ENCODE measurements at regions of chr1 and their contacts with region 1.

Region 1: DNA sequence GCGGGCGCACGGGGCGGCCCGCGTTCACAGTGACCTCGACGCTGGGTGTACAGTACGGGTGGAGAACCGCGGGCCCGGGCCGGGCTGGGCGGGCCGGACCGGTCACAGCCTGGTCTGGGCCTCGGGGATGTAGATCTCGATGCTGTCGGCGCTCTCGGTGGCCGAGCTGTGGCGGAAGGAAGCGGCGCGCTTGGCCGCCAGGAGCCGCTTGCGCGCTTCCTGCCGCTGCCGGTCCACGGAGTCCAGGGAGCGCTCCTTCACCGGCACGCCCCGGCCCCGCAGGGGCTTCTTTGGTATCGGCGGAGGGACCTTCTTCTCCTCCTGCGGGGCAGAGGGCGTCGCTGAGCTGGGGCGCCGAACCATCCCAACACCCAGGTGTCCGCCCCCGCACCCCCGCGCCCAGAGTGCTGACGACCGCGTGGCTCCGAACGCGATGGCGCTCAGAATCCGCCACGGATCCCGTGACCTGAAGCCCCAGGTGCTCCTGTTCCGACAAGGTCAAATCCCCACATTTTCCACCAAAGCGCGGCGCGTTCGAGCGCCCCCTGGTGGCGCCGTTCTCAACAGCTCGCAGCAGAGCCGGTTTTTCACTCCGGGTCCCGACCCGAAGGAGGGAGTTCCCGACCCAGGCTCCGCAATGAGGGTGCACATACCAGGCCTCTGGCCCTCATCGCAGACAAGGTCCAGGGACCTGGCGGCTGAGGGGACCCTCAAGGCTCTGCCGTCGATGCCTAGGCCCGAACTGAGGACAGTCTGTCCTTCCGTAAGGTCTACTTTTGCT is 6.6 kb upstream of the SMIM12 start:
- DNase-seq: peak; percentile 84 to 90
- ATAC-seq: peak; percentile 66 to 89 (median 79)
- H3K4me3 ChIP-seq: peak overlapping the region; percentile 59 to 89 (median 76)
- H3K27ac ChIP-seq: peak overlapping the region; percentile 36 to 90 (median 84)
- H3K4me1 ChIP-seq: peaks cover 0 to 23% (median 15%) of the 10 kb centered on the region in 9 donors
- H3K27me3 ChIP-seq: peaks cover 0 to 4% (median 0%) of the 10 kb centered on the region in 7 donors
- CTCF ChIP-seq: peak; percentile 95 to 99 (median 98)

Region 2: DNA sequence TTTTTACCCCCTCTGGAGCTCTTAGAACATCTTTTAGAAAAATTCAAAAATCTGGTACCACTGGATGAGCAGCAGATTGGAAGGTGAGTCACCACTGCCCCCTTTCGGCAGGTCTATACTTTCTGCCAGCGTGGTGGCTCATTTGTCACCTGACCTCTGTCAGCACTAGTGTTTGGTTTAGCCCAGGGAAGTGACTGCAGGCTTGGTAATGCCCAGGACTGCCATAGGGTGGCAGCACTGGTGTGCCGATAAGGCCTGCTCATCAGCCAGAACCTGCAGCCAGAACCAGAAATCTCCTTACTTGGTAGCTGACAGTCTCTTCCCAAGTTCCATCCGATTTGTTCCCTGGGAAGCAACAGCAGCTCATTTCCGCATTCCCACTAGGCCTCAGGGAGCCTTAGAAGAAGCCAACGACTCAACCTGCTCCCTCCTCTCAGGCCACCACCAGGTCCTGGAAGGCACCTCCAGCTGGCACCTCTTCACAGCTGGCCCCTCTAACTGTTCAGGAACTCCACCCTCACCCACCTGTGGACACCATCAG is 13.4 kb before region 1 on chr1:
- intact Hi-C with region 1: loop called in 1 of 10 experiments (anchors 1 kb)
- DNase-seq: peak; percentile 85 to 91
- ATAC-seq: peak; percentile 86 to 97 (median 94)
- H3K4me3 ChIP-seq: no peak overlapping the region
- H3K27ac ChIP-seq: peak overlapping the region in 9 of 10 donors; percentile 12 to 71 (median 42)
- H3K4me1 ChIP-seq: peaks cover 8 to 67% (median 39%) of the 10 kb centered on the region in 9 donors
- H3K27me3 ChIP-seq: no peaks in the 10 kb centered on the region
- CTCF ChIP-seq: peak; percentile 93 to 98 (median 96)

Region 3: DNA sequence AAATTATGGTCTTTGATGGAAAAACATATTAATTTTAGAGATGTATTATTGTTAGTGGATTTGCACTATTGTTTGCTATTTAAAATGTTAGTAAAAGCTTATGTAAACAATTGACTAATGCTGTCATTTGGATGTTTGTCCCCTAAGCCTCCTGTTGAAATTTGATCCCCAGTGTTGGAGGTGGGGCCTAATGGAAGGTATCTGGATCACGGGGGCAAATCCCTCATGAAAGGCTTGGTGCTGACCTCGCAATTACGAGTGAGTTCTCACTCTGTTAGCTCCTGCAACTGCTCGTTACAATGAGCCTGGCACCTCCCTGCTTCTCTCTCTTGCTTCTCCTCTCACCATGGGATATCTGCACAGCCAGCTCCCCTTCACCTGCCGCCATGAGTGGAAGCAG is 104.7 kb after region 1 on chr1:
- intact Hi-C with region 1: loop called in 1 of 10 experiments (anchors 10 kb)
- DNase-seq: no peak
- ATAC-seq: no peak
- H3K4me3 ChIP-seq: no peak overlapping the region
- H3K27ac ChIP-seq: no peak overlapping the region
- H3K4me1 ChIP-seq: peaks cover 0 to 2% (median 0%) of the 10 kb centered on the region in 9 donors
- H3K27me3 ChIP-seq: peaks cover 0 to 12% (median 0%) of the 10 kb centered on the region in 7 donors
- CTCF ChIP-seq: no peak

Measured in heart right ventricle (tissue), 16 donors.